Activated B cell treated with CpG ODN at 0.5 μM for 24 hours (primary cell): ENCODE measurements at regions of chr7 and their contacts with region 1.

Region 1: DNA sequence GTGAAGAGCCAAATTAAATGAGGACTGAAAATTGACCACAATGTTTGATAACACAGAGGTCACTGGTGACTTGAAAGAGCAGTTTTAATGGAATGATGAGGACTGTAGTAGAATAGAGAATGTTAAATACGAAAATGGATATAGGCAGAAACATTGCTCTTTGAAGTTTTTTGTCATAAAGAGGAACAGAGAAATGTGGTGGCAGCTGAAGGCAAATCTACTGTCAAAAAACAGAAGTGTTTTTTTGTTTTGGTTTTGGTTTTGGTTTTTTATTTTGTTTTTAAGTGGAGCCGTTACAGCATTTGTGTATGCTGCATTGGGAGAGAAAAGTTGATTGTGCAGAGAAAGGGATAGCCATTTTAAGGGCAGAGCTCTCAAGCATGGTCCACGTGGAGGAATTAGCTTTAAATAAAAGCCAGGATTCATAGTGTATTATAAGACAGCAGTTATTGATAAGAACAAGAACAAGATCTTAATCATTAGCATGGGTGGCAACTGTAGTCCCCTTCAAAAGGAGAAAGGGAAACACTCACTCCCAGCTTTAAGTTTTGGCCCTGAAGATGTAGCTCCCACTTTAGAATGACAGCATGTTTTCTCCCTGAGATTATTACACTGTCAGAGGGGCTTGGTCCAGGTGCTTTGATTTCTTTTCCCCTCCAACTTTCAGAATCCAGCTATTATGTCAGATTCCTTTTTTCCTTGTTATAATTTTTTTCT is 156.7 kb upstream of the BET1 start:
- DNase-seq: no peak
- ATAC-seq: peak; percentile 79
- H3K4me3 Mint-ChIP-seq: peak overlapping the region; percentile 78
- H3K27ac Mint-ChIP-seq: peak overlapping the region; percentile 89
- H3K4me1 Mint-ChIP-seq: peaks cover 41% of the 10 kb centered on the region
- H3K27me3 Mint-ChIP-seq: no peaks in the 10 kb centered on the region
- CTCF ChIP-seq: no peak

Region 2: GRCh38 chr7:94177441-94177840 is 16.6 kb after region 1 on chr7:
- CTCF ChIA-PET with region 1: no interaction called
- POLR2A ChIA-PET with region 1: no interaction called
- intact Hi-C with region 1: loop called (anchors 1 kb)
- DNase-seq: no peak
- ATAC-seq: no peak
- H3K4me3 Mint-ChIP-seq: no peak overlapping the region
- H3K27ac Mint-ChIP-seq: no peak overlapping the region
- H3K4me1 Mint-ChIP-seq: peaks cover 18% of the 10 kb centered on the region
- H3K27me3 Mint-ChIP-seq: no peaks in the 10 kb centered on the region
- CTCF ChIP-seq: no peak

Region 3: DNA sequence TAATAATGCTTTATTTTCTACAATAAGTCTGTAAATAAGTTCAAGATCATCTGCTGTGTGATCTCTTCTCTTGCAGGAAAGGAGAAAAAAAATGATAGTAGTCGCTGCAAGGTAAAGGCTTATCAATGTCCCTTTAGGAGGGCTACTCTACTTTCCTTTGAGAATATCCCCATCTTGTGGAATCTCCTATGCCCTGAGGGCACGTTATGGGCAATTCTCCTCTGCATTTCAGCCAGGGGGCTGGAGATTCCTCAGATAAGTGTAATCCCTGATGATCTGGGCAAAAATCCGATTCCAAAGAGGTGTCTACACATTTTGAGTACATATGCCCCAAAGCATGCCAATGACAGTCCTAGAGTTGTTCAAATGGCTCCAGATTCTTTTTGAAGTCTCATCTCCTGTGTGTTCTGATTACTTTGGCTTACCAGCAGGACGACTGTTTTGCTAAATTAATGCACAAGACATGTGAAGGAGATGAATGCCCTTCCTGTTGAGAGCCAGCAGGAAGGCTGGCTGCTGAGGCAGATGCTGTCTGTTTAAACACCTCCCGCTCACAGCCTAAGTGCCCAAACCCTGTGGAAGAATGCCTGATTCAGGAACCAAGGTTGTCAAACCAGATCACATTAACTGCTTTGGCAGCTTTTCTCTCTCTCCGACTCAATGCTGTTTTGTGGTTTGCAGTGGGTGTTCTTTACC is 62.6 kb after region 1 on chr7:
- CTCF ChIA-PET with region 1: no interaction called
- POLR2A ChIA-PET with region 1: no interaction called
- intact Hi-C with region 1: no loop called
- DNase-seq: no peak
- ATAC-seq: no peak
- H3K4me3 Mint-ChIP-seq: no peak overlapping the region
- H3K27ac Mint-ChIP-seq: no peak overlapping the region
- H3K4me1 Mint-ChIP-seq: no peaks in the 10 kb centered on the region
- H3K27me3 Mint-ChIP-seq: peaks cover 3% of the 10 kb centered on the region
- CTCF ChIP-seq: no peak

Region 4: DNA sequence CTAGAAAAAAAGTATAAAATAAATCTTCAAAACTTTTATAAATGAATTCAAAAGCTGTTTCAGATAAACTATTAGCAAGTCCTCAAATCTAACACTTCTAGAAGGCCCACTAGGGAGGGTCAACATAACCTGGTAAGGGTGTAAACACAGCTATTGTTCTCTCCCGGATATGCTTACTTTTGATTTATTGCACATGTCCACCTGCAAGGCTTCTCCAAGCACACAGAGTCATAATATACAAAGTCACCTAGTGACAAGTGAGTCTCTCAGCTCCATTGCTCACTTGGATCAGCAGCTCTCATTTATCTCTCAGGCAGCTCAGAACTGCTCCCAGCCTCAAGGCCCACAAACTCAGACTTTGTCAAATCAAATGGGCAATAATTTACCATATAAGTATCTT is 189.9 kb after region 1 on chr7:
- CTCF ChIA-PET with region 1: no interaction called
- POLR2A ChIA-PET with region 1: no interaction called
- intact Hi-C with region 1: loop called (anchors 5 kb)
- DNase-seq: no peak
- ATAC-seq: no peak
- H3K4me3 Mint-ChIP-seq: no peak overlapping the region
- H3K27ac Mint-ChIP-seq: no peak overlapping the region
- H3K4me1 Mint-ChIP-seq: peaks cover 30% of the 10 kb centered on the region
- H3K27me3 Mint-ChIP-seq: peaks cover 13% of the 10 kb centered on the region
- CTCF ChIP-seq: no peak